ENCODE measurements at regions of chr1 and their contacts with region 1.

Region 1: DNA sequence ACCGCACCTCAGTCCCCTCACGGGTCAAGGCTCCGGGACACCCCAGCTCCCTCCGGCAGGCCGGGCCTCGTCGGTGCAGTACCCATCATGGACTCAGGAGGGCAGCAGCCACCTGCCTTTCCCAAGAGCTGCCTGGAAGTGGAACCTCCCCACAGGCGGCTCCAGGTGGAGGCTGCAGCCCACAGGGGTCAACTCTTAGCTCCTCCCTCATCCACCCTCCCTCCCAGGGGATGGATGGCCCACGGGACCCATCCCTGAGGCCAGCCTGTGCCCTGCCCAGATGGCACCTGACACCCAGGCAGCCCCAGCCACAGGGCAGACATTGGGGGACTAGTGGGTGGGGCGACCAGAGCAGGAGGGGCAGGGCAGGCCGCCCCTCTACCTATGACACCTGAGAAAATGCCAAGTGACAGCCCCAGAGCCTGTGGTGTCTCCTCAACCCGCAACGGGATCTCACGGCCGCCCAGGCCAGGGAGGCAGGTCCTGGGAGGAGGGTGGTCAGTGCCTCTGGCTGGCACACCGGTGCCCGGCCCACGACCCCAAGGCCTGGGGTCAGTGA is 1.2 kb upstream of the ARHGEF16 start:
- DNase-seq: peak; percentile 92

Region 2: GRCh38 chr1:3491291-3492246 is 38.3 kb after region 1 on chr1:
- intact Hi-C with region 1: no loop called
- DNase-seq: peak; percentile 93

Region 3: DNA sequence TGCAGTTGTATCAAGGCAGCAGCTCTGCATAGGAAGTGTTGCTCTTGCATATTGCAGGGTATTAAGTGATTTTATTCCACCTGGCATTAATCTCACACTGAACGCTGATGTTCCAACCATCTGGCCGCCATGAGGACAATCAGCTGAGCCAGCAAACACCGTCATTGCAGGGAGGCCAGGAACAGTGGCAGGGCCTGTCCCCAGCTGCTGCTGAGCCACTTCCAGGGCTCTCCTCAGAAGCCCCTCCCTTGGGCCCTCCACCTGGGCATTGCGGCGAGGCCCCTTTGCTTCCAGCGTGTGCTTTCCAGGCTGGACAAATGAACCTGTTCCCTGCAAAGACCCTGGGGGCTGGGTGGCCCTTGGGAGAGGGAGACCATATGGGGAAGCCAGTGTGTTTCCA is 618.4 kb after region 1 on chr1:
- intact Hi-C with region 1: loop called in 1 of 2 experiments (anchors 5 kb)
- DNase-seq: no peak

Region 4: DNA sequence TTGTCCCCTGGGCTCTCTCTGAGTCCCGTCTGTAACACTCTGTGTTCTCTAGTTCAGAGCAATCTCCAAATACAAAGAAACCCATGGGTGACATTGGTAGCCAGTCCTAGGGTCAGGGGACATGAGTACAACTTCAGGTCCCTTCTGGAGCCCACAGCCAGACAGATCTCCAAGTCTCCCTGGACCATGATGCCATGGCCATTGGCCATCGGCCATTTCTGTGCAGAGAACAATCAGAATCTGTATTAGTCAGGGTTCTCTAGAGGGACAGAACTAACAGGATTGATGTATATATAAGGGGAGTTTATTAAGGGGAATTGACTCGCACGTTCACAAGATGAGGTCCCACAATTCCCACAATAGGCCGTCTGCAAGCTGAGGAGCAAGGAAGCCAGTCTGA is 1308.0 kb after region 1 on chr1:
- intact Hi-C with region 1: loop called in 1 of 2 experiments (anchors 5 kb)
- DNase-seq: no peak